ENCODE measurements at regions of chr2 and their contacts with region 1.

Region 1: DNA sequence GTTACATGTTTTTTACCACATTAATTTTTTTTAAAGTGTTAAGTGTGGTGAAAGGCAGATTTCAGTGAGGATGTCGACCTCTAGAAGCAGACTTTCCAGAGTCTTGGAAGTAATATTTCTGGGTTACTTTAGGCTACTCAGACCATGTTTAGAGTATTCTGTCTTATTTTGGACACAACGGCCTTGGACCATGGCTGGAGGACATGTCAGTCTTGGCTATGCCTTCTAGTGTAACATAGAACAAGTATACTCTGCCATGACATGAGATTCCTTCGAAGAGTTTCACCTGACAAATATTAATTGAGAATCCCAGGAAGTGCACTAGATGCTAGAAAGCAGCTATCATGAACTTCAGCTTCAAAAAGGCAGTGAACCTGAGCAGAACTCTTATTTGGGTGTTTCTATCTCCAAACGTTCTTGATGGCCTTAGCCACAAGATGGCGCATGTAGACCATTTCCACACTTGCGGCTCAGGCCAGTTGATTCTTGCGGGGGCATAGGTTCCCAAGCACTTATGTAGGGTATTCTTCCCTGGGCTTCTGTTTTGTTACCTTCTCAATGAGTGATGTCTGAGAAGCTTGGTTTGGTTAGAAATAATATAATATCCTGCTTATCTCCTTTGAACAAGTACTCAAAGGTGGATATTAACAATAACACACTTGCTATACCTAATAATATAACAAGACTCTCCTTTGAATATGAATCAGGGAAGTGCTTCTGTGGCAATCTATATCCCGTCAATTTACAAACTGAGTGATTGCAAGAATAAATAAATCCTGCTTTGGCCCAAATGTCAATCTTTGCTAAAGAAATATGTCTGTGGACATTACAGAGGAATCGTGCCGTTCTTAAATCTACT is 62.0 kb downstream of the CACNB4 start:
- DNase-seq: peak; percentile 71 to 78
- H3K4me3 ChIP-seq: no peak overlapping the region
- H3K4me3 Mint-ChIP-seq: no peak overlapping the region
- H3K27ac Mint-ChIP-seq: no peak overlapping the region
- H3K4me1 ChIP-seq: no peaks in the 10 kb centered on the region
- H3K4me1 Mint-ChIP-seq: no peaks in the 10 kb centered on the region
- H3K27me3 ChIP-seq: no peaks in the 10 kb centered on the region
- H3K27me3 Mint-ChIP-seq: no peaks in the 10 kb centered on the region
- CTCF ChIP-seq: peak; percentile 80 to 83

Region 2: DNA sequence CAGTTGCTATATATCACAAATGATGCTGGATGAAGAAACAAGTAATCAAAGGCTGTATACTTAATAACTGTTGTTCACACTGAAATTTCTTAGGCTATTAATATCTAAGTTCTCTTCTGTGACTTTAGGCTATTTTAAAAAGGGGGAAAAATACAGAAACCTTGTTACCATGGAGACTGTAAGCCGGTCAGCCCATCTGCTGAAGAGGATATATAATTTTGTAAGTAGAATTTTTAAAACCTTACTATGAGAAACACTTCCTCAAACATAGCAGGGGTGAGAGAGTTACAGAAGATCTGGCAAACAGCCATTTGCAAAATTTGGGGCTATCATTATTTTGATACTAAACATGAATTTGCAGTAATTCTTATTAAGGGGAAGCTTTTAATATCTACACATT is 34.3 kb after region 1 on chr2:
- CTCF ChIA-PET with region 1: no interaction called
- POLR2A ChIA-PET with region 1: no interaction called
- intact Hi-C with region 1: no loop called
- DNase-seq: no peak
- H3K4me3 ChIP-seq: no peak overlapping the region
- H3K4me3 Mint-ChIP-seq: no peak overlapping the region
- H3K27ac Mint-ChIP-seq: no peak overlapping the region
- H3K4me1 ChIP-seq: no peaks in the 10 kb centered on the region
- H3K4me1 Mint-ChIP-seq: no peaks in the 10 kb centered on the region
- H3K27me3 ChIP-seq: no peaks in the 10 kb centered on the region
- H3K27me3 Mint-ChIP-seq: no peaks in the 10 kb centered on the region
- CTCF ChIP-seq: no peak

Region 3: GRCh38 chr2:152097801-152098495 is 61.1 kb after region 1 on chr2:
- CTCF ChIA-PET with region 1: interaction called, 6 read pairs
- POLR2A ChIA-PET with region 1: no interaction called
- intact Hi-C with region 1: loop called (anchors 5 kb)
- DNase-seq: peak in 1 of 2 experiments; percentile 32
- H3K4me3 ChIP-seq: peak overlapping the region; percentile 56
- H3K4me3 Mint-ChIP-seq: peak overlapping the region; percentile 74
- H3K27ac Mint-ChIP-seq: no peak overlapping the region
- H3K4me1 ChIP-seq: no peaks in the 10 kb centered on the region
- H3K4me1 Mint-ChIP-seq: peaks cover 14% of the 10 kb centered on the region
- H3K27me3 ChIP-seq: peaks cover 4% of the 10 kb centered on the region; the same call in 1 of the 2 replicates
- H3K27me3 Mint-ChIP-seq: peaks cover 16% of the 10 kb centered on the region
- CTCF ChIP-seq: no peak

Region 4: GRCh38 chr2:152115952-152116351 is 79.1 kb after region 1 on chr2:
- CTCF ChIA-PET with region 1: no interaction called
- POLR2A ChIA-PET with region 1: no interaction called
- intact Hi-C with region 1: loop called (anchors 1 kb)
- DNase-seq: peak in 1 of 2 experiments; percentile 16
- H3K4me3 ChIP-seq: no peak overlapping the region
- H3K4me3 Mint-ChIP-seq: no peak overlapping the region
- H3K27ac Mint-ChIP-seq: no peak overlapping the region
- H3K4me1 ChIP-seq: no peaks in the 10 kb centered on the region
- H3K4me1 Mint-ChIP-seq: no peaks in the 10 kb centered on the region
- H3K27me3 ChIP-seq: no peaks in the 10 kb centered on the region
- H3K27me3 Mint-ChIP-seq: no peaks in the 10 kb centered on the region
- CTCF ChIP-seq: peak in 1 of 2 experiments; percentile 40

Region 5: GRCh38 chr2:152635635-152636298 is 598.9 kb after region 1 on chr2:
- CTCF ChIA-PET with region 1: interaction called, 3 read pairs
- POLR2A ChIA-PET with region 1: no interaction called
- intact Hi-C with region 1: loop called (anchors 1 kb)
- DNase-seq: peak; percentile 68 to 75
- H3K4me3 ChIP-seq: no peak overlapping the region
- H3K4me3 Mint-ChIP-seq: no peak overlapping the region
- H3K27ac Mint-ChIP-seq: no peak overlapping the region
- H3K4me1 ChIP-seq: no peaks in the 10 kb centered on the region
- H3K4me1 Mint-ChIP-seq: no peaks in the 10 kb centered on the region
- H3K27me3 ChIP-seq: no peaks in the 10 kb centered on the region
- H3K27me3 Mint-ChIP-seq: no peaks in the 10 kb centered on the region
- CTCF ChIP-seq: peak; percentile 71 to 82

Measured in Caco-2 (cell line).